K562 (cell line): ENCODE measurements at regions of chr6 and their contacts with region 1.

Region 1: GRCh38 chr6:34986845-34987246 is 97.8 kb downstream of the ANKS1A start:
- DNase-seq: peak; percentile 76 to 83 (median 78)
- ATAC-seq: peak; percentile 81
- H3K4me3 ChIP-seq: no peak overlapping the region
- H3K27ac ChIP-seq: no peak overlapping the region
- H3K4me1 ChIP-seq: peaks cover 4 to 11% of the 10 kb centered on the region in 2 experiments; a peak in 3 of 5 replicates
- H3K27me3 ChIP-seq: no peaks in the 10 kb centered on the region
- CTCF ChIP-seq: peak; percentile 79 to 95 (median 92)
- EP300 ChIP-seq: no peak
- POLR2A ChIP-seq: no peak
- RAD21 ChIP-seq: peak; percentile 76 to 93

Region 2: DNA sequence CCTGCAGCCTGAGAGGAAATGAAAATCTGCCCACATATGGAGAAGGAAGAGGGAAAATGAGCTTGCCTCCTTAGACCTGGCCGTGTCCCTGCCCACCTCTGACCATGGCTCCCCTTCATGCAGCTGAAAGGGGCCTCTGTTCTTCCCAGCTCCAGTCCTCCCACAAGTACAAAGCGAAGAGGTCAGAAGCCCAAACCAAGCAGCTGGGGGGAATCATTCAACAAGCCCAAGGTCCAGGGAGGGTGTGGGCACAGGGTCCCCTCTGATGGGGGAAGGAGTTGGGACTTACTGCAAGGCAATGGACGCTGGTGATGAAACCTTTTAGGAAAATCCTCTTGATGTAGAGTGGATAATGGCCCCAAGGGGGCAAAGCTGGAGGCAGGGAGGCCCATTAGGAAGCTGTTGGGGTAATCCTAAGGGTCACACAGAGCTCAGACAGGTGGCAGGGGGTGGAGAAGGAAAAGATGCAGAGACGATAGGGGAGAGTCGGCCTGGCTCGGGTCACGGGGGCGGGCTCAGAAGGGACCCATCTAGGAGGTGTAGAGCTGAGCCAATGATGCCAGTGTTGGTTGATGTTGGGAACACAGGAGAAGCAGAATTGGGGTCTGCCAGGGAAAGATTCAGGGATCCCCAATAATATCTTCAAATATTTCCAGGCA is 824.9 kb before region 1 on chr6:
- CTCF ChIA-PET with region 1: no interaction called
- POLR2A ChIA-PET with region 1: no interaction called
- in situ Hi-C with region 1: no loop called
- intact Hi-C with region 1: loop called (anchors 10 kb)
- DNase-seq: no peak
- ATAC-seq: no peak
- H3K4me3 ChIP-seq: no peak overlapping the region
- H3K27ac ChIP-seq: no peak overlapping the region
- H3K4me1 ChIP-seq: no peaks in the 10 kb centered on the region
- H3K27me3 ChIP-seq: peaks cover 8 to 20% of the 10 kb centered on the region in 2 experiments; a peak in 3 of 5 replicates
- CTCF ChIP-seq: no peak
- EP300 ChIP-seq: no peak
- POLR2A ChIP-seq: no peak
- RAD21 ChIP-seq: no peak

Region 3: DNA sequence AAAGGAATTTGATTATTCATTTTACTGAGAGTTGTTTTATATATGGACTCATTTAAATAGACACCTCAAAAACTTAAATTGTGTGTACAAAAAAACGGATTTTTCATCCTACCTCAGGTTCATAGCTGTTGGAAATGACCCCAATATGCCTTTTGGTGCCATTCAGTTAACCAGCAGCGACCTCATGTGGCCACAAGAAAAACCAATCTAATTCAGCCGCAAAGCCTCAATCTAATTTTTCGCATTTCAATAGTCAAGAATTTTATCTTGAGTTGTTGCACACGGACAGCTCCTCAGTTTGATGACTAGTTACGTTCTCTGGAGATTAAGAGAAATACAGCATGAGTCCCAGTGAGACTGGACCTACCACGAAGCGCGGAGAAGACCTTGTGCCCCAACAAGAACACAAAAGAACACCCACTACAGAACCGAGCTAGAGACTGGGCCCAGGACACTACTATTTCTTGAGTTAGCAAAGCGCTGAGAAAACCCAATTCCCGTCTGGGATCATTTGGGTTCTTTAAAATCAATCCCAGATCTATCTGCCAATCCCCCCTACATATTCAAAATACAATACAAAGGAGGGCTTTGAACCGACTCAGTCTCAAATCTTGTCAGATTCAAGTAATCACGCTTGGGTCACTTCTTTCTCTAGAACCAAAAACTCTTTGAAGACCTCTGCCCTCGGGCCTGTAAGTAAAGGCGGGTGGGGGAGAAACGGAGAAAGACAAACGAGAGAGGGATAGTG is 153.2 kb after region 1 on chr6:
- CTCF ChIA-PET with region 1: interaction called, 17 read pairs
- POLR2A ChIA-PET with region 1: interaction called, 3 read pairs
- in situ Hi-C with region 1: loop called (anchors 5 kb)
- intact Hi-C with region 1: loop called (anchors 1 kb)
- DNase-seq: peak; percentile 62 to 79 (median 66)
- ATAC-seq: peak; percentile 80
- H3K4me3 ChIP-seq: no peak overlapping the region
- H3K27ac ChIP-seq: no peak overlapping the region
- H3K4me1 ChIP-seq: peaks cover 0 to 13% of the 10 kb centered on the region in 2 experiments; a peak in 2 of 5 replicates
- H3K27me3 ChIP-seq: peaks cover 5 to 8% of the 10 kb centered on the region in 2 experiments; a peak in 4 of 5 replicates
- CTCF ChIP-seq: peak; percentile 85 to 97 (median 90)
- EP300 ChIP-seq: 0 out of 2 replicates have a peak, but pooled peaks have one; percentile 1
- POLR2A ChIP-seq: no peak
- RAD21 ChIP-seq: peak; percentile 97 to 98

Region 4: DNA sequence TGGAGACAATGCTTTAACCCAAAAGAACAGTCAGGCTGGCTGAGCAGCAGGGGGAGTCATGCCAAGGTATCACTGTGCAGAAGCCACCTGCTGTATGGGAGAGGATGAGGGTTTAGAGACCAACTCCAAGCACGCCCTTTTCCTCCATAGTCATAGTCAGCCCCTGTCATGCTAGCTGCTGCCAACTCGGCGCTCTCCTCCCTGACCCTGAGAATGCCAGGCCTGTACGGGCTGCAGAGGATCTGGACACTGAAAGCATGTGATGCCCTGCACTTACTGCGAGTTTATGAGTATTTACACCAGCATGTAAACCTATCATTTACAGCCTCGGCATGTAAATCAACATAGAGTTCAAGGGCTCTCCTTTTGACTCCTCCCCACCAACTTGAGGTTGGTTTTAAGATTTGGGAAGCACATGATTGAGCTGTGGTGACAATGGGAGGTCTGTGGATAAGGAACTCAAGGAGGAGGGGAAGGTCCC is 215.3 kb after region 1 on chr6:
- CTCF ChIA-PET with region 1: interaction called, 14 read pairs
- POLR2A ChIA-PET with region 1: interaction called, 3 read pairs
- in situ Hi-C with region 1: no loop called
- intact Hi-C with region 1: loop called (anchors 2 kb)
- DNase-seq: no peak
- ATAC-seq: no peak
- H3K4me3 ChIP-seq: no peak overlapping the region
- H3K27ac ChIP-seq: no peak overlapping the region
- H3K4me1 ChIP-seq: no peaks in the 10 kb centered on the region
- H3K27me3 ChIP-seq: peaks cover 31 to 50% of the 10 kb centered on the region in 2 experiments
- CTCF ChIP-seq: no peak
- EP300 ChIP-seq: no peak
- POLR2A ChIP-seq: no peak
- RAD21 ChIP-seq: no peak

Region 5: GRCh38 chr6:35240840-35241801 is 254.3 kb after region 1 on chr6:
- CTCF ChIA-PET with region 1: interaction called, 13 read pairs
- POLR2A ChIA-PET with region 1: interaction called, 3 read pairs
- in situ Hi-C with region 1: loop called (anchors 5 kb)
- intact Hi-C with region 1: loop called (anchors 1 kb)
- DNase-seq: peak; percentile 80 to 89 (median 86)
- ATAC-seq: peak; percentile 96
- H3K4me3 ChIP-seq: no peak overlapping the region
- H3K27ac ChIP-seq: no peak overlapping the region
- H3K4me1 ChIP-seq: peaks cover 0 to 8% of the 10 kb centered on the region in 2 experiments; a peak in 1 of 5 replicates
- H3K27me3 ChIP-seq: no peaks in the 10 kb centered on the region
- CTCF ChIP-seq: peak; percentile 88 to 99 (median 97)
- EP300 ChIP-seq: no peak
- POLR2A ChIP-seq: no peak
- RAD21 ChIP-seq: peak; percentile 87 to 92

Region 6: GRCh38 chr6:35258336-35258735 is 271.5 kb after region 1 on chr6:
- CTCF ChIA-PET with region 1: no interaction called
- POLR2A ChIA-PET with region 1: no interaction called
- in situ Hi-C with region 1: no loop called
- intact Hi-C with region 1: no loop called
- DNase-seq: no peak
- ATAC-seq: no peak
- H3K4me3 ChIP-seq: peak overlapping the region; percentile 79
- H3K27ac ChIP-seq: peak overlapping the region; percentile 95
- H3K4me1 ChIP-seq: peaks cover 16 to 37% of the 10 kb centered on the region in 2 experiments
- H3K27me3 ChIP-seq: no peaks in the 10 kb centered on the region
- CTCF ChIP-seq: no peak
- EP300 ChIP-seq: no peak
- POLR2A ChIP-seq: no peak
- RAD21 ChIP-seq: no peak

Region 7: DNA sequence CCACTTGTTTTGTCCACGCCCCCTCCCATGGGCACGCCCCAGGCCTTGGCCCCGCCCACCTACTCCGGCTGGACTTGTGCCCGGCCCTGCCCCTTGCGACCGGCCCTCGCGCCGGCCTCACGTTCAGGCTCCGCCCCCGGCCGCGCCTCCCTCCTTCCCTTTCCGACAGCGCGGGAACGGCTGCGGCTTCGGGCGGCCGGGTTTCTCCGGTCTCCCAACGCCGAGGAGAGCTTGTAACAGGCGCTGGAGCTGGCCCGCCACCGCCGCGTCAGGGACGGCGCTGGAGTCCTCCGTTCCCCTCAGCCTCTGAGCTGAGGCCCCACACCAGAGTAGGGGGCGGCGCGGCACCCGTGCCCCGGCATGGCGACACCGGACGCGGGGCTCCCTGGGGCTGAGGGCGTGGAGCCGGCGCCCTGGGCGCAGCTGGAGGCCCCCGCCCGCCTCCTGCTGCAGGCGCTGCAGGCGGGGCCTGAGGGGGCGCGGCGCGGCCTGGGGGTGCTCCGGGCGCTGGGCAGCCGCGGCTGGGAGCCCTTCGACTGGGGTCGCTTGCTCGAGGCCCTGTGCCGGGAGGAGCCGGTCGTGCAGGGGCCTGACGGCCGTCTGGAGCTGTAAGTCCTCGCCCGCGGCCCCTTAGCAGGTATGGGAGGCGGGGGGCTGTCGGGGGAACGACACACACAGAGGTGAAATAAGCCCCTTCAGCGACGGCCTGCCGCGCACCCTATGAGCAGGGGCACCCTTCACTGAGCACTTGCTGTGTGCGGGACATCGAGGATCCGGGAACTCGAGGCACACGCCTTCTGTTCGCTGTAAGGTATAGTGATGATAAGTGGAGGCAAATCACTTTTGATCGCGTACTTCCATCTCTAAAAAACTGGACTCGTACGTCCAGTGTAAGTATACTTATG is 465.6 kb after region 1 on chr6 and contains the start of gene FANCE:
- CTCF ChIA-PET with region 1: no interaction called
- POLR2A ChIA-PET with region 1: no interaction called
- in situ Hi-C with region 1: no loop called
- intact Hi-C with region 1: loop called (anchors 5 kb)
- DNase-seq: peak; percentile 98 to 99 (median 99)
- ATAC-seq: peak; percentile 94
- H3K4me3 ChIP-seq: peak within 1 kb of the TSS; percentile 73
- H3K27ac ChIP-seq: peak within 1 kb of the TSS; percentile 78
- H3K4me1 ChIP-seq: peaks cover 18 to 27% of the 10 kb centered on the region in 2 experiments
- H3K27me3 ChIP-seq: peaks cover 1 to 5% of the 10 kb centered on the region in 2 experiments; a peak in 1 of 5 replicates
- CTCF ChIP-seq: no peak; a peak in 1 of 6 replicates
- EP300 ChIP-seq: no peak
- POLR2A ChIP-seq: peak; percentile 92
- RAD21 ChIP-seq: no peak
- polyA plus RNA-seq, gene FANCE: 5.7 to 5.9 TPM